ENCODE measurements at regions of chr10 and their contacts with region 1.

Region 1: DNA sequence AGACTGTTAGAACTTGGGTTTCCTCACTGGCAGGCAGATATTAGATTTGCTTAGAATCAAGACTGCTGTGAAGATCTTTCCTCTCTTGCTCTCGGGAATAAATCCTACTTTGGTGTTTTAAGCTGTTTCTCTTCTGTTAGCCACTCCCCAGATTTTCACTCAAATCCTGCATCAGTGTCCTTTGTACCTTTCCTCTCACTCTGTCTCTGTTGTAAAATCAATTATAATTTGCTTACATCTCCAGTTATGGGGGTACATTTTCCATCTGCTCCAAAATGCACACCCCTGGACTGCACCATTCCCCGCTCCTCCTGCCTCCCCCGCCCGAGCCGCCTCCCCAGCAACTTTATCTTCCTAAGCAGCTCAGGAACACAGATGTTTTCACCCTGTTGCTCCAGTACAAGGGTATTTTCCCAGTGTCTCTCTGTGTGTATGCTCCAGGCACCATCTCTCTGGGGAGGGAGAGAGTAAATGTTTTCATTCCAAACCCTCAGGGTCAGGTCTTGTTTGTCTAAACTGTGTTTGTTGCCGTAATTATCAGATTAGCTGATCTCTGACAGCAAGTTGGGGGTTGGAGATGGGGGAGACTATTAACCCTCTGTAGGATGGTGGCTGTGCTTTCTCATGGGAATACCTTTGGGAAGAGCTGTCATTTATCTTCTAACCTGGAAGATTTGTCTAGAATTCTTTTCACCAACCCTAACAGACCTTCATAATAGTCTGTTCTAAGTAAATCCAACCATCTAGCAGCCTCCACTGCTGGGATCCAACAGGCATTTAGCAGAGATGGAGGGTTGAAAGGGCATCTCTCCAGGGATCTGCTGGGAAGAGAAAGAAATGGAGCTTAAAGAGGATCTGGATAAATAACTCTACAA is 20.4 kb upstream of the GOT1 start:
- DNase-seq: no peak

Region 2: GRCh38 chr10:99430451-99431189 is 20.2 kb before region 1 on chr10 and contains the start of gene GOT1:
- CTCF ChIA-PET with region 1: interaction called, 12 read pairs
- POLR2A ChIA-PET with region 1: interaction called, 12 read pairs
- DNase-seq: peak; percentile 99

Region 3: DNA sequence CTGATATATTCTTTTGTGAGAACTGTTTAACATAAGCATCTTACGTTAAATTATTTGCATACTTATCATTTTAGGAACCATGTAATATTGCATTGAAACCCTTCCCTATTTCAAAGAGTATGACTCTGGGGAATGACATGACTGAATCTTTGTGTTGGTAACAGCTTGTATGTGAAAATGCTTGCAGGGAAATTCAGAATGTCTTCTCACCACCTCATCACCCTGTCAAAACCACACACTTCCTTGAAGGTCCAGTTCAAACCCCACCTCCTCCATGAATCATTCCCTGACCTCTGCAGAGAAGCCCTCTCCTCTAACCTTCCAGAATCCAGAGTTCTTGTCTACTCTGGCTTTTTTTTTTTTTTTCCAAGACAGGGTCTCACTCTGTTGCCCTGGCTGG is 55.6 kb after region 1 on chr10:
- CTCF ChIA-PET with region 1: no interaction called
- POLR2A ChIA-PET with region 1: no interaction called
- DNase-seq: no peak